GM10248 (cell line): ENCODE measurements at regions of chr16 and their contacts with region 1.

Region 1: GRCh38 chr16:21646721-21647561 is 5.5 kb downstream of the IGSF6 start:
- DNase-seq: peak; percentile 71
- CTCF ChIP-seq: no peak

Region 2: GRCh38 chr16:21584817-21585216 is 62.1 kb before region 1 on chr16:
- CTCF ChIA-PET with region 1: interaction called, 58 read pairs
- POLR2A ChIA-PET with region 1: no interaction called
- DNase-seq: no peak
- CTCF ChIP-seq: no peak